Posterior cingulate gyrus (tissue), 11 donors: ENCODE measurements at regions of chr1 and their contacts with region 1.

Region 1: DNA sequence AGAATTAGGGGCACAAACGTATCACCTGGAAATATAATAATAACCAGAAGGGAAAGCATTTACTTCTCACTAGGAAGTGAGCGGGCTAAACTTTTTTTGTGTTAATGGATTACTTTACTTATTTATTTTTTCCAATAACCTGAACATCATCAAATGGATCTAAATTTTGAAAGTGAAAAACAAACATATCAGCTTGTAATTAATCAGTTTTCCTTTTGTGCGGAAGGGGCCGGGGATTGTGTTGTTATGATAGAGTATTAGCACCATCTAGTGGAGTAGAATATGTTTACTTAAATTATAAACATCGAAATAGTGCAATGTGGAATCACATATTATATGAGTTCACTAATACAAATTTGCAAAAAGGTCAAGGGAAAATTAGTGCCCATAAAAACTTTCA is 9.0 kb downstream of the CFH start:
- DNase-seq: no peak

Region 2: DNA sequence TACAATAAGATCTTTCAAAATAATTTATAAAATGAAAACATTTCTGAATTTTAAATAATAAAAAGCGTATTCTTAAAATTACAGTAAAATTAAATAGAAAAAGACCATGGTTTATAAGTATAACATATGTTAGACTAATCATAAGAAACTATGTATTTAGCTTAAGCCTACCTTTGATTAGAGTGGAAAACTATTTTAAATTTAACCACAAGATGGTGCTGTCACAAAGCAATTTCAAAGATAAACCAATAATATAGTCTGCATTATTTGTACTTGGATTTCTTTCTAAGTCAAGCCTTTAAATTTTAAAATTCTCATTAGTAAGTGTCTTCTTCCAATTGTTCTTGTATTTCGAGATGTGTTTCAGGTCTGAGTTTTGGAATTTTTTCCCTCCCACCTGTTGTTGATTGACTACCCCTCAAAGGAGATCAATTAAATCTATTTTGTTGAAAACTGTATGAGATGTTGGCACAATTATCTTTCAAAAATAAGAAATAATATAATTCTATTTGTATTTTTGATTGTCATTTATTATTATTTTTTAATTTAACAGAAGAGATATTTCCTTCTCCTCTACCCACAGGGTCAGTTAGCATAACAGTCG is 512.4 kb before region 1 on chr1:
- intact Hi-C with region 1: loop called (anchors 2 kb)
- DNase-seq: no peak

Region 3: GRCh38 chr1:196317535-196318522 is 343.0 kb before region 1 on chr1:
- intact Hi-C with region 1: loop called (anchors 5 kb)
- DNase-seq: peak in 9 of 10 donors; percentile 8 to 81 (median 28)

Region 4: DNA sequence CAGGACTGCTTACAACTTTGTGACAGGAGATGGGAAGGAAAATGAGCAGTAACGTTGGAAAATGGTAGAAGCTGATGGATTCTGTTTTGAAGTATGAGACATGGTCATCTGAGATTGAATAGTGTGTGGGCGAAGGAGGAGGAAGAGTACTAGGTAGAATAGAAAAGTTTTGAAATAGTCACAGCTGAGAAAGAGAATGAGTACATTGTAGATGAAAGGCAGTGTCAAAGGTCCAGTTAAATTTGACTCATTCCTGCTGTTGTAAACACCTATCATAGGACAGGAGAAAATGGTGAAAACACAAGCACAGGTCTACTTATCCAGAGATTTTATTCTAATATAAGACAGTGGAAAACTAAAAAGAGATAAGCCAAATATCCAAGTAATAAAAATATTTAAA is 57.0 kb after region 1 on chr1:
- intact Hi-C with region 1: no loop called
- DNase-seq: no peak